Aorta (tissue), 5 donors: ENCODE measurements at regions of chr2 and their contacts with region 1.

Region 1: DNA sequence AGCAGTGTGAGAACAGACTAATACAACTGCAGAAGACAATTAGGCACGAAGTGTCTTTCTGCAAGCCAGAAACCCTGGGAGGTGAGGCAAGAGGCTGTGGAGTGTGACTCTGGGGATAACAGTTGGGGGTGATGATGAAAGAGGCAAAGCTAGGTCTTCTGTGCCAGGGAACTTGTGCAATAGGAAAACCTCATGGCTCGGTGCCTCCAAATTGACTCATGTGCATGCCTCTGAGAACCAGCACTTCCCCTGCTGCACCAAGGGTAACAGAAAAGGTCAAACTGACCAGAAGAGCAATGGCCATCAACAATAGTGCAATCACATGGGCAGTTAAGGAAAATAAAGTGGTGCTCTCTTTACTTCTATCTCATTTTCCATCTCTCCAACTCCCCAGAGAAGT is 136.4 kb downstream of the SCG2 start:
- DNase-seq: peak; percentile 90 to 92
- ATAC-seq: peak; percentile 93
- H3K4me3 ChIP-seq: no peak overlapping the region
- H3K27ac ChIP-seq: no peak overlapping the region
- H3K4me1 ChIP-seq: peaks cover 0 to 3% of the 10 kb centered on the region in 2 donors
- H3K27me3 ChIP-seq: no peaks in the 10 kb centered on the region

Region 2: GRCh38 chr2:223414646-223415045 is 51.1 kb before region 1 on chr2:
- intact Hi-C with region 1: loop called in 1 of 2 experiments (anchors 5 kb)
- DNase-seq: peak; percentile 79 to 81
- ATAC-seq: peak; percentile 85
- H3K4me3 ChIP-seq: no peak overlapping the region
- H3K27ac ChIP-seq: no peak overlapping the region
- H3K4me1 ChIP-seq: peaks cover 0 to 4% of the 10 kb centered on the region in 2 donors
- H3K27me3 ChIP-seq: no peaks in the 10 kb centered on the region

Region 3: GRCh38 chr2:223576873-223577272 is 111.1 kb after region 1 on chr2:
- intact Hi-C with region 1: no loop called
- DNase-seq: no peak
- ATAC-seq: peak; percentile 66
- H3K4me3 ChIP-seq: no peak overlapping the region
- H3K27ac ChIP-seq: no peak overlapping the region
- H3K4me1 ChIP-seq: no peaks in the 10 kb centered on the region
- H3K27me3 ChIP-seq: no peaks in the 10 kb centered on the region

Region 4: DNA sequence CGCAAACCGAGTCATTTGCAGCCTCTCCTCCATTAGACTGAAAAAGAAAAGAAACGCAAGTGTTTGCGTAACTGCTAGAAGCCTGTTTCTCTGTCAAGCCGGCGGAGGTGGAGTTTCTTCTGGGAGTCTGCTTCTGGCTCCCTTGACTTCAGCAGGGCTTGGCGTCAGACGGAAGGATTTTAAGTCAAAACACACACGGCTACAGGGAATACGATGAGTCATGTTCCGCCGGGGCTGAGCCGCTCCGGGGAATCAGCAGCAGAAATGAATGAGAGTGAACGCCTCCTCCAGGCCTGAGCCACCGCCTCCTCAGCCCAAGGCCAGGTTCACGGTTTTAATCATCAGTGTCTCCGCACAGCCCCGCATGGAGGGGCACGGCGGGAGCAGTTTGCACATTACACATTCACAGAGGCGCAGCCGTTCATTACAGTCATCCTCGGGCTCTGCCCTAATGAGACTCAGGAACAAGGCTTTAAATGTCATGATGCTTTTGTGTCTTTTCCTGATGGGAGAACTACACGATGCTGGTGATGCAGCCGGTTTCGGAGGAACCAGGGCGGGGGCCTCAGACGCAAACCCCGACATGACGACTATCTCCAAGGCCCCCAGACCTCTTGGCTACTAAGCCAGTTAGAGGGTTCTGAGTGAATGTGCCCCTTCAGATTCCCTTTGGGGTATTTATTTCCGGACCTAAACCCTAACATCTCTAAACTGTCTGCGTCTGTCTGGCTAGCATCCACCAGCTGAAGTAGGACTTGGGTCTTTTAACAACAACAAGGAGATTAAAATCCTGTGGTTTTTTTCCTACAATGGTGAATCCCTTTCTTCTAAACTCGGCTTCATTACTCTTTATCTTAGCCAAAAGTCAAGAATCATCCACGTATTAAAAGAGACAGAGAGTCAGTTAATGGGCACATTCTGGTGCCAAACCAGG is 147.5 kb after region 1 on chr2:
- intact Hi-C with region 1: loop called in 1 of 2 experiments (anchors 10 kb)
- DNase-seq: peak; percentile 92 to 93
- ATAC-seq: peak; percentile 94
- H3K4me3 ChIP-seq: peak overlapping the region in 1 of 2 donors; percentile 52
- H3K27ac ChIP-seq: no peak overlapping the region
- H3K4me1 ChIP-seq: no peaks in the 10 kb centered on the region
- H3K27me3 ChIP-seq: no peaks in the 10 kb centered on the region

Region 5: GRCh38 chr2:224734949-224735348 is 1269.2 kb after region 1 on chr2:
- intact Hi-C with region 1: no loop called
- DNase-seq: no peak
- ATAC-seq: no peak
- H3K4me3 ChIP-seq: no peak overlapping the region
- H3K27ac ChIP-seq: no peak overlapping the region
- H3K4me1 ChIP-seq: no peaks in the 10 kb centered on the region
- H3K27me3 ChIP-seq: no peaks in the 10 kb centered on the region